ENCODE measurements at regions of chr3 and their contacts with region 1.

Region 1: DNA sequence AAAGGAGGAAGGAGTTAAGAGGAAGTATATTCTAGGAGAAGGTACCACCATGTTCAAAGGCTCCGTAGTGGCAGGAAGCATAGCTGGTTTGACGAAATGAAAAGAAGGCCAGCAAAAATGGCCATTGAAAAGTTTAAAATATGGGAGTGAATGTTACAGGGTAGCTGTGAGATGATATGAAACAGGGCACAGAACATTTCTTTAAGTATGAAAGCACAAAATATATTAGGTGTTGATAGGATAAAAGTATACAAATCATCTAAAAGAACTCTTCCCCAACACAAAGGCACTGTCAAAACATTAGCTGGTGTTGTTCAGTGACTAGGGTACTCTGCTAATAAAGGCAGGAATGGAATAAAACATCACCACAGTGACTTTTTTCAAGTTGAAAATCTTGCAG is 216.2 kb downstream of the LRRN1 start:
- H3K4me3 ChIP-seq: no peak overlapping the region
- H3K27ac ChIP-seq: no peak overlapping the region
- H3K4me1 ChIP-seq: no peaks in the 10 kb centered on the region; the same call in 1 of the 2 replicates
- CTCF ChIP-seq: no peak

Region 2: GRCh38 chr3:3998140-3998922 is 17.1 kb before region 1 on chr3:
- CTCF ChIA-PET with region 1: interaction called, 11 read pairs
- POLR2A ChIA-PET with region 1: no interaction called
- H3K4me3 ChIP-seq: no peak overlapping the region
- H3K27ac ChIP-seq: no peak overlapping the region
- H3K4me1 ChIP-seq: no peaks in the 10 kb centered on the region
- CTCF ChIP-seq: no peak

Region 3: DNA sequence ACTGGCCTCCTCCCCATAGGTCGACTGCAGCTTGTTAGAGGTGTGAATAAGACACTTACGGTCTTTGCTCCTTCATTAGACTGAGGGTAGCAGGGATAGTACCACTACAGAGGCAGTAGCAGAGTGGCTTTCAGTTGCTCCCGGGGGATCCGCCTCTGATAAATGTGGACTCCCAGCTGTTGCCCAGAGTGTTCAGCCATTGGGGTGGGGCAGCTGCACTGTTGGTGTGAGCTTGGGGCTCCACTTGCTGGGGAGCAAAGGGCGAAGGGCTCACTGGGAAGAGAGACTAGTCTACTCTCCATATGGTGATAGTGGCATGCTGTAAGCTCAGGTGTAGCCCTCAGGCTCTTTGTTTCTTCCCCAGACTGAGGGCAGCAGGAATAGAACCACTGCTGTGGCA is 22.9 kb after region 1 on chr3:
- CTCF ChIA-PET with region 1: no interaction called
- POLR2A ChIA-PET with region 1: no interaction called
- H3K4me3 ChIP-seq: no peak overlapping the region
- H3K27ac ChIP-seq: no peak overlapping the region
- H3K4me1 ChIP-seq: no peaks in the 10 kb centered on the region
- CTCF ChIP-seq: no peak

Region 4: DNA sequence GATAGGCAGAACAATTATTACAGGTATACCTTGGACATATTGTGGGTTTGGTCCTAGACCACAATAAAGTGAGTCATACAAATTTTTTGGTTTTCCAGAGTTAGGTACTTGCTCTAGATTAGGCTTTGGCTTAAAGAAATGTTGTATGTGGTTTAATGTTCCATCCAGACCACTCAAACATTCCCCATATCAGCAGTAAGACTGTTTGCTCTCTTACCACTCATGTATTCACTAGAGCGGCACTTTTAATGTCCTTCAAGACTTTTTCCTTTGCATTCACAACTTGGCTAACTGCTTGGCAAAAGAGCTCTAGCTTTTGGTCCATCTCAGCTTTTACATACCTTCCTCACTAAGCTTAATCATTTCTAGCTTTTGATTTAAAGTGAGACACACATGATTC is 37.3 kb after region 1 on chr3:
- CTCF ChIA-PET with region 1: no interaction called
- POLR2A ChIA-PET with region 1: no interaction called
- H3K4me3 ChIP-seq: no peak overlapping the region
- H3K27ac ChIP-seq: no peak overlapping the region
- H3K4me1 ChIP-seq: no peaks in the 10 kb centered on the region
- CTCF ChIP-seq: no peak

Region 5: GRCh38 chr3:4340411-4341335 is 325.2 kb after region 1 on chr3:
- CTCF ChIA-PET with region 1: no interaction called
- POLR2A ChIA-PET with region 1: no interaction called
- H3K4me3 ChIP-seq: no peak overlapping the region
- H3K27ac ChIP-seq: no peak overlapping the region
- H3K4me1 ChIP-seq: peaks cover 3% of the 10 kb centered on the region; the same call in 1 of the 2 replicates
- CTCF ChIP-seq: no peak

Measured in HEK293 (cell line).